CD4-positive, alpha-beta memory T cell (primary cell): ENCODE measurements at regions of chr1 and their contacts with region 1.

Region 1: GRCh38 chr1:100132566-100133477 is at the starts of genes SASS6 and TRMT13:
- DNase-seq: peak; percentile 93 to 97 (median 95)
- H3K4me3 ChIP-seq: peak within 1 kb of the TSS; percentile 84 to 99
- H3K4me3 Mint-ChIP-seq: peak within 1 kb of the TSS; percentile 96 to 99 (median 99)
- H3K27ac ChIP-seq: peak within 1 kb of the TSS; percentile 59
- H3K27ac Mint-ChIP-seq: peak within 1 kb of the TSS; percentile 94 to 99 (median 97)
- H3K4me1 ChIP-seq: peaks cover 29% of the 10 kb centered on the region
- H3K4me1 Mint-ChIP-seq: peaks cover 23 to 39% (median 32%) of the 10 kb centered on the region in 4 donors
- H3K27me3 ChIP-seq: no peaks in the 10 kb centered on the region
- H3K27me3 Mint-ChIP-seq: no peaks in the 10 kb centered on the region
- total RNA-seq, gene SASS6: 5.6 to 5.8 TPM
- total RNA-seq, gene TRMT13: 45.8 to 45.9 TPM

Region 2: GRCh38 chr1:99808391-99809115 is 324.3 kb before region 1 on chr1:
- CTCF ChIA-PET with region 1: no interaction called
- POLR2A ChIA-PET with region 1: no interaction called
- intact Hi-C with region 1: loop called (anchors 10 kb)
- DNase-seq: peak; percentile 43 to 60 (median 57)
- H3K4me3 ChIP-seq: no peak overlapping the region
- H3K4me3 Mint-ChIP-seq: peak overlapping the region in 1 of 8 donors; percentile 4
- H3K27ac ChIP-seq: no peak overlapping the region
- H3K27ac Mint-ChIP-seq: peak overlapping the region in 1 of 7 donors; percentile 13
- H3K4me1 ChIP-seq: no peaks in the 10 kb centered on the region
- H3K4me1 Mint-ChIP-seq: peaks cover 0 to 6% (median 3%) of the 10 kb centered on the region in 4 donors
- H3K27me3 ChIP-seq: no peaks in the 10 kb centered on the region
- H3K27me3 Mint-ChIP-seq: peaks cover 10 to 13% of the 10 kb centered on the region in 2 donors

Region 3: DNA sequence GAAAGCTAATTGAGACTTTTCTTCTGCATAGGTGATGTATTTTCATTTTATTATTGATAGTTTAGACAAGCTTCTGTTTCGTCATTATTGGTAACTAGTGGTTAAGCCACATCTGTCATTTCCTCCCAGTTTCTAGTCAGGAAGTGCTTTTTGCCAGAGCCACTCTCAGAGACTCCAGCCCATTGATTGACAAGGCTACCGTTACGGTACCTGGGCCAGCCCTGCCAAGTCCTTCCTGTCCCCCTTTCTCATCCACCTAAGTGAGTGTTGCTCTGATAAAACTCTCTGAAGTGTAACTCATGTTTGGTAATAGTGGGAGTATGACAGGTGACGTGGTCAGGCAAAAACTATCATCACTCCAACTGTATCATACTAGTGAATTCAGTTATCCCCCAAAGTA is 312.3 kb before region 1 on chr1:
- CTCF ChIA-PET with region 1: no interaction called
- POLR2A ChIA-PET with region 1: no interaction called
- intact Hi-C with region 1: no loop called
- DNase-seq: peak in 4 of 5 donors; percentile 32 to 51 (median 42)
- H3K4me3 ChIP-seq: no peak overlapping the region
- H3K4me3 Mint-ChIP-seq: peak overlapping the region in 6 of 8 donors; percentile 4 to 69 (median 29)
- H3K27ac ChIP-seq: no peak overlapping the region
- H3K27ac Mint-ChIP-seq: peak overlapping the region in 5 of 7 donors; percentile 54 to 93 (median 73)
- H3K4me1 ChIP-seq: peaks cover 15% of the 10 kb centered on the region
- H3K4me1 Mint-ChIP-seq: peaks cover 7 to 18% (median 14%) of the 10 kb centered on the region in 4 donors
- H3K27me3 ChIP-seq: no peaks in the 10 kb centered on the region
- H3K27me3 Mint-ChIP-seq: peaks cover 3 to 6% of the 10 kb centered on the region in 2 donors

Region 4: GRCh38 chr1:99849744-99850458 is 282.9 kb before region 1 on chr1 and contains the start of gene AGL:
- CTCF ChIA-PET with region 1: no interaction called
- POLR2A ChIA-PET with region 1: no interaction called
- intact Hi-C with region 1: loop called (anchors 2 kb)
- DNase-seq: peak; percentile 87 to 89 (median 88)
- H3K4me3 ChIP-seq: peak within 1 kb of the TSS; percentile 61 to 92
- H3K4me3 Mint-ChIP-seq: peak within 1 kb of the TSS; percentile 97 to 99 (median 98)
- H3K27ac ChIP-seq: peak within 1 kb of the TSS; percentile 61
- H3K27ac Mint-ChIP-seq: peak within 1 kb of the TSS; percentile 87 to 97 (median 95)
- H3K4me1 ChIP-seq: peaks cover 18% of the 10 kb centered on the region
- H3K4me1 Mint-ChIP-seq: peaks cover 21 to 34% (median 26%) of the 10 kb centered on the region in 4 donors
- H3K27me3 ChIP-seq: no peaks in the 10 kb centered on the region
- H3K27me3 Mint-ChIP-seq: no peaks in the 10 kb centered on the region
- total RNA-seq, gene AGL: 19.0 to 20.5 TPM

Region 5: DNA sequence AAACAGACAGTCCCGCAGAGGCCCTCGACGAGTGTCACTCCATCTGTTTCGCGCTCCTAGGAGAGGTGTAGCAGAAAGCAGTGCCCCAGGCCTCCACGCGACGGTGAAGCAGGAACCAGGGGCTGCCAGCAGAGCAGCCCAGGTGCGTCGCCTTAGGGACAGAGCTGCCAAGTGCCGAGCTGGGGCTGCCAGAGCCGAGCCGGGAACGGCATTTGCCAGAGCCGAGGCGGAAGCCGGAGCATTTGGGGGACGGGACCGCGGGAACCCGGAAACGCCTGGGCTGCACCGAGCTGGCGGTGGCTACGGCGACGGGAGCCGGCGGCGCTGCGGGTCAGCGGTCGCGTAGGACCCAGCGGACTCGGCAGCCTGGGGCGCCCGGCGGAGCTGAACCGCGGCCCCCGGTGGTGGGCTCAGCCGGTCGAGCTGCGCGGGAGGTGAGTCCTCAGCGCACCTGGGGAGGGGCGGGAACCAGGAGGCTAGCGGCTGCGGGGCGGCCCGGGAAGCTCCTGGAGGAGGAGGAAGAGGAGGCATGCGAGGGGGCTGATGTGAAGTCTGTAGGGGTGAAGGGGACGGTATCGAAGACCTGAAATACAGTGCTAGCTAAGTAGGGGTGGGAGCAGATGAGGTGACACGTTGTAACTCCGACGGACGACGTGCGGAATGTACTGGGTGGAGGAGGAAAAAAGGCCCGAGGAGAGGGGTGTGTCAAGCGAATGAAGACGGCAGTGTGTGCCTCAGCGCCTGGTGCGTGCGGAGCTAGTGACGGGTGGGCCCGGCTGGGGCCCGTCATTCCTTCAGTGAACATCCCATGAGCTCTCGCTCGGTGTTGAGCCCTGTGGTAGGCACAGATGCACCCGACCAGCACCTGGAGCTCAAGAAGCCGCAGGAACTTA is 162.8 kb before region 1 on chr1 and contains the start of gene SLC35A3:
- CTCF ChIA-PET with region 1: interaction called, 3 read pairs
- POLR2A ChIA-PET with region 1: interaction called, 24 read pairs
- intact Hi-C with region 1: loop called (anchors 1 kb)
- DNase-seq: peak; percentile 75 to 82 (median 78)
- H3K4me3 ChIP-seq: peak within 1 kb of the TSS; percentile 31 to 74
- H3K4me3 Mint-ChIP-seq: peak within 1 kb of the TSS; percentile 99 to 100 (median 100)
- H3K27ac ChIP-seq: peak within 1 kb of the TSS; percentile 75
- H3K27ac Mint-ChIP-seq: peak within 1 kb of the TSS; percentile 91 to 100 (median 98)
- H3K4me1 ChIP-seq: peaks cover 34% of the 10 kb centered on the region
- H3K4me1 Mint-ChIP-seq: peaks cover 16 to 47% (median 32%) of the 10 kb centered on the region in 4 donors
- H3K27me3 ChIP-seq: no peaks in the 10 kb centered on the region
- H3K27me3 Mint-ChIP-seq: no peaks in the 10 kb centered on the region
- total RNA-seq, gene SLC35A3: 26.6 to 31.5 TPM

Region 6: GRCh38 chr1:100249537-100250257 is 116.9 kb after region 1 on chr1 and contains the start of gene DBT:
- CTCF ChIA-PET with region 1: no interaction called
- POLR2A ChIA-PET with region 1: interaction called, 4 read pairs
- intact Hi-C with region 1: loop called (anchors 1 kb)
- DNase-seq: peak; percentile 88 to 96 (median 89)
- H3K4me3 ChIP-seq: peak within 1 kb of the TSS; percentile 93 to 95
- H3K4me3 Mint-ChIP-seq: no peak within 1 kb of the TSS
- H3K27ac ChIP-seq: peak within 1 kb of the TSS; percentile 76
- H3K27ac Mint-ChIP-seq: peak within 1 kb of the TSS in 1 of 7 donors; percentile 58
- H3K4me1 ChIP-seq: peaks cover 34% of the 10 kb centered on the region
- H3K4me1 Mint-ChIP-seq: peaks cover 11 to 20% (median 16%) of the 10 kb centered on the region in 4 donors
- H3K27me3 ChIP-seq: no peaks in the 10 kb centered on the region
- H3K27me3 Mint-ChIP-seq: no peaks in the 10 kb centered on the region
- total RNA-seq, gene DBT: 16.1 to 16.8 TPM

Region 7: DNA sequence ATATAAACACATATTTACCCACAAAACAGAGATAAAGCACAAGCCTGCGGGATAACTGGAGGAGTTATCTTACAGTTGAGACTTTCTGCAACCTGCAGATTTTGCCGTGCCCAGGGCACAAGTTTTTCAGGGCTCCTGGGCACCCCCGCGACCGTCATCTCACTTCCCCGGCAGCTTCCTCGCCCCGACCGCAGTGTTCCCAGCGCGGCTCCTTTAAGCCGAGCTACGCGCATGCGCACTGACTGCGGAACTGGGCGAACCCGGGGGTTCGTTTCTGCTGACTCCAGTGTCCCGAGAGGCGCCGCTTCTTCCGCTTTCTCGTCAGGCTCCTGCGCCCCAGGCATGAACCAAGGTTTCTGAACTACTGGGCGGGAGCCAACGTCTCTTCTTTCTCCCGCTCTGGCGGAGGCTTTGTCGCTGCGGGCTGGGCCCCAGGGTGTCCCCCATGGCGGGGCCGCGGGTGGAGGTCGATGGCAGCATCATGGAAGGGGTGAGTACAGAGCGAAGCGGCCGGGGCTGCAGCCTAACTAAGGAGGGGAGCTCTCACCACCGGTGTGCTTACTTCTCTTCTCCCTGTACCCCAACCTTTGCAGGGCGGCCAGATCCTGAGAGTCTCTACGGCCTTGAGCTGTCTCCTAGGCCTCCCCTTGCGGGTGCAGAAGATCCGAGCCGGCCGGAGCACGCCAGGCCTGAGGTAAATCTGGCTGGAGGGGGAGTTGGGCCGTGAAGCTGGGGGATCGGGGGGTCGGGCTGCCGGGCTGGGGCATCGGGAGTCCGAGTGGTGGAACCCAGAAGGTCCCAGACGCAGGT is 133.3 kb after region 1 on chr1 and contains the start of gene RTCA:
- CTCF ChIA-PET with region 1: interaction called, 4 read pairs
- POLR2A ChIA-PET with region 1: interaction called, 10 read pairs
- intact Hi-C with region 1: loop called (anchors 1 kb)
- DNase-seq: peak; percentile 93 to 97 (median 94)
- H3K4me3 ChIP-seq: peak within 1 kb of the TSS; percentile 77
- H3K4me3 Mint-ChIP-seq: peak within 1 kb of the TSS; percentile 99 to 100 (median 100)
- H3K27ac ChIP-seq: peak within 1 kb of the TSS; percentile 78
- H3K27ac Mint-ChIP-seq: peak within 1 kb of the TSS; percentile 96 to 99 (median 98)
- H3K4me1 ChIP-seq: peaks cover 44% of the 10 kb centered on the region
- H3K4me1 Mint-ChIP-seq: peaks cover 19 to 58% (median 39%) of the 10 kb centered on the region in 4 donors
- H3K27me3 ChIP-seq: no peaks in the 10 kb centered on the region
- H3K27me3 Mint-ChIP-seq: no peaks in the 10 kb centered on the region
- total RNA-seq, gene RTCA: 39.7 to 41.4 TPM

Region 8: DNA sequence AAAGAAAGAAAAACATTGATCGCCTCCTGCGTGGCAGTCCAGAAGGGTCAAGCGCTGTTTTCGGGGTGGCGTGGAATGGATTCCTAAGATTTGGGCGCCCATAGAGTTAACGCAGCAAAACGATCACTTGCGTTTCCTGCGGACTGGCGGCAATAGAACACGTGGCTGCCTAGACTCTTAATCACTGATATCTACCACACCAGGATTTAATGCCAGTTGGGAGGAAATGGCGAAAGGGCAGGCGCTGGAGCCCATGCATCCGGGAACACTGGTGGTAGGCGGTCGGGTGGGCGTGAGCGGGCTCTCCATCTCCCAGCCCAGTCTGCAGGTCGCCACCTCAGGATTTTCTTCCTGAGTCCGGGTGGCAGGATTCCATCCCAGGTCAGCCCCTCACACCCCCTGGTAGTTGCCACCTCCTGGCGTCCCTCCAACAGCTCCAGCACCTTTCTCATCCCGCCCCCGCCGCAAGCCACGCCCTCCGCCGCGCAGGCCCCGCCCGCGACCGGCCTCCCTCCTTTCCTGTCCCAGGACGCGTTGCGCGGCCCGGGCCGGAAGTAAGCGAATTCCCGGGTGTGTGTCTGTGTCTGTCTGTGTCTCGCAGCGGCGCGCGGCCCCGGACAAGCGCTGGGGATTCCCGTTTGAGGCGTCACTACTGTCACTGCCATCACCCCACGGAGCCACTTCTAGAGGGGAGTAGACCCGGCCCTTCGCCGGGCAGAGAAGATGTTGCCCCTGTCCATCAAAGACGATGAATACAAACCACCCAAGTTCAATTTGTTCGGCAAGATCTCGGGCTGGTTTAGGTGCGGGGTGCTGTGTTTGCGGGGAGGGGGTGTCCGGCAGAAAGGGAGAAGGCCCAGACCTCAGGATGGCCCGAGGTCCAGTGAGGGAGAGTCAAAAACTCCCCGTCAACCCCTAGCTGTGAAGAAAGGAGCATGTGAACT is 763.0 kb after region 1 on chr1 and contains the start of gene SLC30A7:
- CTCF ChIA-PET with region 1: no interaction called
- POLR2A ChIA-PET with region 1: interaction called, 8 read pairs
- intact Hi-C with region 1: loop called (anchors 1 kb)
- DNase-seq: peak; percentile 93 to 98 (median 95)
- H3K4me3 ChIP-seq: peak within 1 kb of the TSS; percentile 96 to 98
- H3K4me3 Mint-ChIP-seq: peak within 1 kb of the TSS; percentile 94 to 100 (median 100)
- H3K27ac ChIP-seq: peak within 1 kb of the TSS; percentile 100
- H3K27ac Mint-ChIP-seq: peak within 1 kb of the TSS; percentile 99 to 100 (median 100)
- H3K4me1 ChIP-seq: peaks cover 44% of the 10 kb centered on the region
- H3K4me1 Mint-ChIP-seq: peaks cover 28 to 60% (median 39%) of the 10 kb centered on the region in 4 donors
- H3K27me3 ChIP-seq: no peaks in the 10 kb centered on the region
- H3K27me3 Mint-ChIP-seq: no peaks in the 10 kb centered on the region
- total RNA-seq, gene SLC30A7: 54.9 TPM